PC-9 (cell line): ENCODE measurements at regions of chr7 and their contacts with region 1.

Region 1: GRCh38 chr7:32891800-32892520 is 400 bp upstream of the KBTBD2 start:
- DNase-seq: peak; percentile 91 to 98
- H3K4me3 ChIP-seq: peak overlapping the region; percentile 86
- H3K27ac ChIP-seq: peak overlapping the region; percentile 87
- H3K4me1 ChIP-seq: peaks cover 35% of the 10 kb centered on the region
- H3K27me3 ChIP-seq: no peaks in the 10 kb centered on the region
- CTCF ChIP-seq: no peak

Region 2: DNA sequence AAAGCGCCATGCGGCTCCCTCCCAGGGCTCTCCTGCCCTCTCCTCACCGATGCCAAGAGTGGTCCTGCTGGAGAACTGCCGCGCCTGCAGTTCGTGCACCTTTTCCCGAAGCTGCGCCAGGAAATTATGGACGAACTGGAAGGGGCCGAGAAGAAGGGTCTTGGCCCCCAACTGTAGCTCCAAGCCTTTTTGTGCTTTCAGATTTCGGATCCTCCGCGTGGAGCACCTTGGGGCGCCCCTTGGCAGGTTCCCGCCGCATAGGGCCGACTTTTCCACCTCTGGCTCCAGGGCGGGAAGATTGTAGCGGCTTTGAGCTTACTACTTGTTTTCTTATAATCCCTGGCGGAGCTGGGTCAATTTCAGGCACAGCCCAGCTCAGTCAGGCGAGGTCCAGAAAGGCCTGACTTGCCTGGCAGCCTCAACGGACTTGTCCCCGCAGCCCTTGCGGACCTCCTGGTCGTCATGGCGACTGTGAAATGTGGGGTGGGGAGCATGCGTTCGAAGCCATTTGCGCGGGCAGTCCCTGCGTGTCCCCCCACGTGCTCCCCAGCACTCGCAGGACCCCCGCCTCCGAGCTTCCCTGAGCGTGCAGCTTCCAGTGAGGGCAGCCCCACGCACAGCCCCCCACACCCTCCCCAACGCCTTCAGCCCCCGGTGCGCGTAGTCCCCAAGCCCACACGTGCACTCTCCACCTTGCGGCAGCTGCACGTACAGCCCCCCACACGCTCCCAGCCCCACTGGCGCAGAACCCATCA is 130.3 kb before region 1 on chr7:
- CTCF ChIA-PET with region 1: no interaction called
- POLR2A ChIA-PET with region 1: interaction called, 11 read pairs
- intact Hi-C with region 1: no loop called
- DNase-seq: no peak
- H3K4me3 ChIP-seq: no peak overlapping the region
- H3K27ac ChIP-seq: no peak overlapping the region
- H3K4me1 ChIP-seq: no peaks in the 10 kb centered on the region
- H3K27me3 ChIP-seq: no peaks in the 10 kb centered on the region
- CTCF ChIP-seq: no peak

Region 3: GRCh38 chr7:32905175-32905662 is 13.3 kb after region 1 on chr7:
- CTCF ChIA-PET with region 1: interaction called, 6 read pairs
- POLR2A ChIA-PET with region 1: interaction called, 25 read pairs
- intact Hi-C with region 1: loop called (anchors 1 kb)
- DNase-seq: peak; percentile 85 to 93
- H3K4me3 ChIP-seq: peak overlapping the region; percentile 66
- H3K27ac ChIP-seq: peak overlapping the region; percentile 39
- H3K4me1 ChIP-seq: peaks cover 9% of the 10 kb centered on the region; the same call in 1 of the 2 replicates
- H3K27me3 ChIP-seq: no peaks in the 10 kb centered on the region
- CTCF ChIP-seq: no peak

Region 4: GRCh38 chr7:32957326-32958045 is 65.5 kb after region 1 on chr7 and contains the start of gene FKBP9:
- CTCF ChIA-PET with region 1: no interaction called
- POLR2A ChIA-PET with region 1: interaction called, 25 read pairs
- intact Hi-C with region 1: loop called (anchors 2 kb)
- DNase-seq: peak; percentile 77 to 97
- H3K4me3 ChIP-seq: peak within 1 kb of the TSS; percentile 85
- H3K27ac ChIP-seq: peak within 1 kb of the TSS; percentile 28
- H3K4me1 ChIP-seq: peaks cover 13% of the 10 kb centered on the region
- H3K27me3 ChIP-seq: no peaks in the 10 kb centered on the region
- CTCF ChIP-seq: no peak
- total RNA-seq, gene FKBP9: 155 and 160 TPM in 2 replicates

Region 5: DNA sequence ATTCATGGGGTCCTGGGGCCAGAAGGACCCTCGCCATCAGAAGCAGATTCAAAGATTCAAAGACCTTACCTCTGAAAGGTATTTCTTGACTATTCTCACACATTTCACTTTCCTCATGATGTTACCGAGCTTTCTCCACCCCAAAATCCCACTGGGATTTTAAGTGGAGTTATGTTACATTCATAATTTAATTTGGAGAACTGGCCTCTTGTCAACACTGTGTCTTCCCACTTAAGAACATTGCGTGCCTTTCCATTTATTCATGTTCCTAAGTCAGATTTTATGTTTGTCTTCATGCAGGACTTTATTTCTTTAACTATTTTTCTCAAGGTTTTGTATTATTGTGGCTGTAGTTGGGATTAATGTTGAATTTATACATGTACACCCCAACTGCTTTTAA is 889.8 kb after region 1 on chr7:
- CTCF ChIA-PET with region 1: no interaction called
- POLR2A ChIA-PET with region 1: no interaction called
- intact Hi-C with region 1: no loop called
- DNase-seq: no peak
- H3K4me3 ChIP-seq: no peak overlapping the region
- H3K27ac ChIP-seq: no peak overlapping the region
- H3K4me1 ChIP-seq: no peaks in the 10 kb centered on the region
- H3K27me3 ChIP-seq: peaks cover 22% of the 10 kb centered on the region
- CTCF ChIP-seq: no peak